Activated T-helper 1 cell treated with anti-CD3 and anti-CD28 coated beads, Interleukin-12 subunit alpha, Interleukin-12 subunit beta, Interleukin-2, Interleukin-4 antibody, amounts not matched to agents 30 ng/mL and 10 ng/mL and 1 ng/mL, durations not matched to agents 14 hours and 24 hours and 36 hours (primary cell): ENCODE measurements at regions of chr17 and their contacts with region 1.

Region 1: GRCh38 chr17:61551255-61551742 is 39.7 kb downstream of the NACA2 start:
- DNase-seq: no peak
- H3K4me3 Mint-ChIP-seq: no peak overlapping the region
- H3K27ac Mint-ChIP-seq: no peak overlapping the region
- H3K4me1 Mint-ChIP-seq: no peaks in the 10 kb centered on the region
- H3K27me3 Mint-ChIP-seq: peaks cover 21% of the 10 kb centered on the region

Region 2: DNA sequence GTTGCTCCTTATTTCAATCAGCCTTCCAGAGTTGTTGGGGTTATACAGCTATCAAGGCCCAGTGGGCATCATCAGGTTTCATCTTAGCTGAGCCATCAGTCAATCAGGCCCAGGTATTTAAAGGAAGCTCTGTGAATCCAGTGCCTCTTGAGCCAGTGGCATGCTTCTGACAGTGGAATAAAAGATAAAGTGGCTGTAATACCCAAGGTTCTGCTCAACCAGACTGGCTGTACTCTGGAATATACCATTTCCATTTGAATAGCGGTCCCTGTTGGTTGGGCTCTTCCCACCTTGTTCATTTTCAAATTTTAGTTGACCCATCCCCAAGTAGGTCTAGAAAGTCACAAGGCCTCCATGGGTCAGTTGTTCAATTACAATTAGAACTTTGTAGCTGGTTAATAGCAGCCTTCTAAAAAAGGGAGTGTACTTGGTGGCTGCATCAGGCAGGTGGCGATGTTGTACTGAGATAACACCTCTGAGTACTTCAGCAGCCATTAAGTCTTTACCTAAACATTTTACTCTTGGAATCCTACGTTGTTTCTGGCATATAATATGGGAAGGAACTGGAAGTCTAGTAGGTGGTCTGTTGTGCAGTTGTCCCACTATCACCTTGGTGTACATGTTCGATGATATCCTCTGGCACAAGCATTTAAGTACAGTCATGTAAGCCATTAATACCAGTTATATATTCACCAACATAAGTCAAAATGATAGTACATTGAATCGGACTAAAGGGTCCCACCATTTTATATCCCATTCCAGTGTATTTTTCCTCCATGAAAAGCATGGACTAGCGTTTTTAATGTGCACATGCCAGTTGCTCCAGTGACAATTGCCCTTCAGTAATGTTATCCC is 579.6 kb before region 1 on chr17:
- intact Hi-C with region 1: loop called (anchors 2 kb)
- DNase-seq: no peak
- H3K4me3 Mint-ChIP-seq: no peak overlapping the region
- H3K27ac Mint-ChIP-seq: no peak overlapping the region
- H3K4me1 Mint-ChIP-seq: no peaks in the 10 kb centered on the region
- H3K27me3 Mint-ChIP-seq: peaks cover 11% of the 10 kb centered on the region

Region 3: GRCh38 chr17:61412143-61412859 is 139.0 kb before region 1 on chr17:
- intact Hi-C with region 1: loop called (anchors 1 kb)
- DNase-seq: peak; percentile 69
- H3K4me3 Mint-ChIP-seq: no peak overlapping the region
- H3K27ac Mint-ChIP-seq: no peak overlapping the region
- H3K4me1 Mint-ChIP-seq: peaks cover 7% of the 10 kb centered on the region
- H3K27me3 Mint-ChIP-seq: peaks cover 51% of the 10 kb centered on the region

Region 4: DNA sequence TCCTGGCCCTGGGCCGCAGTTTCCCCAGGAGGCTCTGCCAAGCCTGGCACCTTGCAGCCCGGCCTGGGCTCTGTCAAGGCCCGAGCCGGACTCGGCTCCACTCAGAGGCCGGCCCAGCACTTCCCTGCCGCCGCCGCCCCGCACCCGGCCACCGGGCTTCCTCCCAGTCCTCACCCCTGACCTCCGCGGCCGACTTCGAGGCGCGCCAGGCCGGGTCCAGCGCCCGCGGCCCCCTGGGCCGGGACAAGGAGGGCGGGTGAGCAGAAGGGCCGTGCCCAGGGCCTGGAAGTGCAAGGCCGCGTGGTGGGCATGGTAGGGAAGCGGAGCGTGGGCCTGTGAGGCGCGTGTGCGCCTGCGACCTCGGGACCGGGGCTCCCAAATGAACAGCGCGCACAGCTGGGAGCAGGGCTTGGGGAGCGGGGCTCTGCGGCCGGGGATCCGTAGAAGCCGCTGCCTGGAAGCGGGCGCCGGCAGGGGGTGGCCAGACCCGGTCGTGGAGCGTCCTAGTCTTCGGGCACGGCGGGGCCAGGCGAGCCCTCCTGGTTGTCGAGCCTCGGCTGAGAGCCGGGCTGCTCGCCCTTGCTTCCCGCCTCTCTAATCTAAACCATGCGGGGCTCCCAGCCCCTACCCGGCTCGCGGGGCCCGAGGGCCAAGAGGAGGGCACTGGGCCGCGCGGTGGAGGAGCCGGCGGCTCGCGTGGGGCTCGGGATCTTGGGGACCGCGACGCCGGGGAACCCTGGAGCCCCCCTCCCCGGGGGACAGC is 99.6 kb before region 1 on chr17:
- intact Hi-C with region 1: loop called (anchors 10 kb)
- DNase-seq: no peak
- H3K4me3 Mint-ChIP-seq: no peak overlapping the region
- H3K27ac Mint-ChIP-seq: no peak overlapping the region
- H3K4me1 Mint-ChIP-seq: peaks cover 6% of the 10 kb centered on the region
- H3K27me3 Mint-ChIP-seq: peaks cover 72% of the 10 kb centered on the region